Activated CD4-positive, alpha-beta T cell treated with anti-CD3 and anti-CD28 coated beads for 36 hours (primary cell): ENCODE measurements at regions of chr19 and their contacts with region 1.

Region 1: DNA sequence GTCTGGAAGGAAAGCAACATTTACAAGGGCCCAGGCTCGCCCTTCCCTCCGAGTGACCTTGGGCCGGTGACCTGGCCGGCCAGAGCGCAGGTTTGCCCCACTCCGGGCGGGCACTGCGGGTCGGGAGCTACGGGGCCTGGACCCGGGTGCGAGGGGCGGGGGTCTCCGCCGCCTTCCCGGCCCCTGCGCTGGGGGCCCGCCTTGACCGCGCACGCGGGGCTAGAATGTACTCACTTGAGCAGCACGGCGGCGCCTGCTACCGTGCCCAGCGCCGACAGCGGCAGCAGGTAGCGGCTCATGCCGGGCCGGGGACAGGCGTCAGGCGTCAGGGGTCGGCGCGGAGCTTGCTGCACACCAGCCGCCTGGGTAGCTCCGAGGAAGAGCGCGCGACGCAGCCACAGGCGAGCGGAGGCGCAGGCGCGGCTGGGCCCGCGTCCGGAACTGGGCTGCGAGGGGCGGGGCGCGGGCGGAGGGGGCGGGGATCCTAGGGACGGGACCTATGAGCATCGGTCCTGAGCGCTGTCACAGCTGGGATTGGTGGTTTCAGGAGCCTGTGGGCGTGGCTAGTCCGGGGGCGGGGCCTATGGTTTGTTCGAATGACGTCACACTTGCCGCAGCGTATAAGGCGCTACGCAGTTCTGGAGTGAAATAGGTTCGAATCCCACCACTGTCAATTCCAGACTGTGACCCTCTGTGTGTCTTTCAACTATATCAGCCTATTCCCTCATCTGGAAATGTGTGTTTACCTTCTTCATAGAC is at the start of gene RDH13:
- DNase-seq: peak; percentile 100
- ATAC-seq: peak; percentile 100
- H3K4me3 Mint-ChIP-seq: peak within 1 kb of the TSS; percentile 79
- H3K27ac Mint-ChIP-seq: peak within 1 kb of the TSS; percentile 61
- H3K4me1 Mint-ChIP-seq: peaks cover 9% of the 10 kb centered on the region
- H3K27me3 Mint-ChIP-seq: peaks cover 23% of the 10 kb centered on the region
- total RNA-seq, gene RDH13: 11.9 to 12.8 TPM

Region 2: GRCh38 chr19:55005684-55006488 is 57.0 kb before region 1 on chr19:
- CTCF ChIA-PET with region 1: no interaction called
- POLR2A ChIA-PET with region 1: no interaction called
- intact Hi-C with region 1: loop called (anchors 1 kb)
- DNase-seq: peak; percentile 65
- ATAC-seq: peak; percentile 86
- H3K4me3 Mint-ChIP-seq: peak overlapping the region; percentile 82
- H3K27ac Mint-ChIP-seq: peak overlapping the region; percentile 94
- H3K4me1 Mint-ChIP-seq: peaks cover 25% of the 10 kb centered on the region
- H3K27me3 Mint-ChIP-seq: peaks cover 13% of the 10 kb centered on the region

Region 3: GRCh38 chr19:55027472-55028337 is 35.2 kb before region 1 on chr19:
- CTCF ChIA-PET with region 1: no interaction called
- POLR2A ChIA-PET with region 1: no interaction called
- intact Hi-C with region 1: no loop called
- DNase-seq: no peak
- ATAC-seq: no peak
- H3K4me3 Mint-ChIP-seq: no peak overlapping the region
- H3K27ac Mint-ChIP-seq: no peak overlapping the region
- H3K4me1 Mint-ChIP-seq: no peaks in the 10 kb centered on the region
- H3K27me3 Mint-ChIP-seq: no peaks in the 10 kb centered on the region

Region 4: GRCh38 chr19:55080968-55081772 is 18.3 kb after region 1 on chr19:
- CTCF ChIA-PET with region 1: no interaction called
- POLR2A ChIA-PET with region 1: interaction called, 4 read pairs
- intact Hi-C with region 1: loop called (anchors 1 to 2 kb)
- DNase-seq: peak; percentile 95
- ATAC-seq: peak; percentile 71
- H3K4me3 Mint-ChIP-seq: peak overlapping the region; percentile 69
- H3K27ac Mint-ChIP-seq: peak overlapping the region; percentile 31
- H3K4me1 Mint-ChIP-seq: peaks cover 22% of the 10 kb centered on the region
- H3K27me3 Mint-ChIP-seq: peaks cover 56% of the 10 kb centered on the region

Region 5: GRCh38 chr19:55099533-55100506 is 36.9 kb after region 1 on chr19:
- CTCF ChIA-PET with region 1: no interaction called
- POLR2A ChIA-PET with region 1: no interaction called
- intact Hi-C with region 1: no loop called
- DNase-seq: no peak
- ATAC-seq: no peak
- H3K4me3 Mint-ChIP-seq: no peak overlapping the region
- H3K27ac Mint-ChIP-seq: no peak overlapping the region
- H3K4me1 Mint-ChIP-seq: no peaks in the 10 kb centered on the region
- H3K27me3 Mint-ChIP-seq: no peaks in the 10 kb centered on the region

Region 6: GRCh38 chr19:55369671-55370304 is 306.9 kb after region 1 on chr19:
- CTCF ChIA-PET with region 1: no interaction called
- POLR2A ChIA-PET with region 1: no interaction called
- intact Hi-C with region 1: no loop called
- DNase-seq: peak; percentile 60
- ATAC-seq: peak; percentile 77
- H3K4me3 Mint-ChIP-seq: peak overlapping the region; percentile 58
- H3K27ac Mint-ChIP-seq: no peak overlapping the region
- H3K4me1 Mint-ChIP-seq: peaks cover 5% of the 10 kb centered on the region
- H3K27me3 Mint-ChIP-seq: peaks cover 37% of the 10 kb centered on the region